ENCODE measurements at regions of chr19 and their contacts with region 1.

Region 1: GRCh38 chr19:33143897-33144405 is 12.0 kb downstream of the WDR88 start:
- DNase-seq: peak; percentile 68
- H3K4me3 ChIP-seq: no peak overlapping the region
- H3K27ac ChIP-seq: no peak overlapping the region
- H3K4me1 ChIP-seq: no peaks in the 10 kb centered on the region
- H3K27me3 ChIP-seq: no peaks in the 10 kb centered on the region
- CTCF ChIP-seq: peak; percentile 95

Region 2: GRCh38 chr19:33248954-33249613 is 105.1 kb after region 1 on chr19:
- CTCF ChIA-PET with region 1: interaction called, 11 read pairs
- POLR2A ChIA-PET with region 1: no interaction called
- intact Hi-C with region 1: no loop called
- DNase-seq: no peak
- H3K4me3 ChIP-seq: no peak overlapping the region
- H3K27ac ChIP-seq: no peak overlapping the region
- H3K4me1 ChIP-seq: no peaks in the 10 kb centered on the region
- H3K27me3 ChIP-seq: no peaks in the 10 kb centered on the region
- CTCF ChIP-seq: no peak

Measured in A673 (cell line).